Activated CD4-positive, alpha-beta memory T cell treated with anti-CD3 and anti-CD28 coated beads for 36 hours (primary cell): ENCODE measurements at regions of chr11 and their contacts with region 1.

Region 1: DNA sequence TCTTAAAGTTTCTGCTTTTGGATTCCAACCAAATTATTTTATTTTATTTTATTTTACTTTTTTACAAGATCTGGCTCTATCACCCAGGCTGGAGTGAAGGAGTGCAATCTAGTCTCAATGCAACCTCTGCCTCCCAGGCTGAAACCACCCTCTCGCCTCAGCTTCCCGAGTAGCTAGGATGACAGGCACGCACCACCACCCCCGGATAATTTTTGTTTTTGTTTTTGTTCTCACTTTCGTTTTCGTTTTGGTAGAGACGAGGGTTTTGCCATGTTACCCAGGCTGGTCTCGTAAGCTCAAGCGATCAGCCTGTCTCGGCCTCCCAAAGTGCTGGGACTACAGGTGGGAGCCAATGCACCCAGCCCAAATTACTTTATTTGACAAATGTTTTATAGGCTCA is 219.8 kb downstream of the ETS1 start:
- DNase-seq: peak; percentile 75
- H3K4me3 Mint-ChIP-seq: peak overlapping the region; percentile 30
- H3K27ac Mint-ChIP-seq: no peak overlapping the region
- H3K4me1 Mint-ChIP-seq: peaks cover 24% of the 10 kb centered on the region
- H3K27me3 Mint-ChIP-seq: no peaks in the 10 kb centered on the region

Region 2: GRCh38 chr11:128399251-128400121 is 31.9 kb after region 1 on chr11:
- CTCF ChIA-PET with region 1: no interaction called
- POLR2A ChIA-PET with region 1: no interaction called
- intact Hi-C with region 1: loop called (anchors 2 kb)
- DNase-seq: peak; percentile 31
- H3K4me3 Mint-ChIP-seq: no peak overlapping the region
- H3K27ac Mint-ChIP-seq: peak overlapping the region; percentile 29
- H3K4me1 Mint-ChIP-seq: peaks cover 23% of the 10 kb centered on the region
- H3K27me3 Mint-ChIP-seq: no peaks in the 10 kb centered on the region

Region 3: GRCh38 chr11:128412847-128413791 is 45.5 kb after region 1 on chr11:
- CTCF ChIA-PET with region 1: no interaction called
- POLR2A ChIA-PET with region 1: no interaction called
- intact Hi-C with region 1: no loop called
- DNase-seq: no peak
- H3K4me3 Mint-ChIP-seq: no peak overlapping the region
- H3K27ac Mint-ChIP-seq: peak overlapping the region; percentile 14
- H3K4me1 Mint-ChIP-seq: peaks cover 40% of the 10 kb centered on the region
- H3K27me3 Mint-ChIP-seq: no peaks in the 10 kb centered on the region